ENCODE measurements at regions of chr13 and their contacts with region 1.

Region 1: GRCh38 chr13:51814825-51815650 is 11.1 kb upstream of the DHRS12 start:
- DNase-seq: no peak
- H3K4me3 ChIP-seq: peak overlapping the region; percentile 45
- H3K27ac ChIP-seq: no peak overlapping the region
- H3K27me3 ChIP-seq: peaks cover 49% of the 10 kb centered on the region
- CTCF ChIP-seq: peak; percentile 83

Region 2: DNA sequence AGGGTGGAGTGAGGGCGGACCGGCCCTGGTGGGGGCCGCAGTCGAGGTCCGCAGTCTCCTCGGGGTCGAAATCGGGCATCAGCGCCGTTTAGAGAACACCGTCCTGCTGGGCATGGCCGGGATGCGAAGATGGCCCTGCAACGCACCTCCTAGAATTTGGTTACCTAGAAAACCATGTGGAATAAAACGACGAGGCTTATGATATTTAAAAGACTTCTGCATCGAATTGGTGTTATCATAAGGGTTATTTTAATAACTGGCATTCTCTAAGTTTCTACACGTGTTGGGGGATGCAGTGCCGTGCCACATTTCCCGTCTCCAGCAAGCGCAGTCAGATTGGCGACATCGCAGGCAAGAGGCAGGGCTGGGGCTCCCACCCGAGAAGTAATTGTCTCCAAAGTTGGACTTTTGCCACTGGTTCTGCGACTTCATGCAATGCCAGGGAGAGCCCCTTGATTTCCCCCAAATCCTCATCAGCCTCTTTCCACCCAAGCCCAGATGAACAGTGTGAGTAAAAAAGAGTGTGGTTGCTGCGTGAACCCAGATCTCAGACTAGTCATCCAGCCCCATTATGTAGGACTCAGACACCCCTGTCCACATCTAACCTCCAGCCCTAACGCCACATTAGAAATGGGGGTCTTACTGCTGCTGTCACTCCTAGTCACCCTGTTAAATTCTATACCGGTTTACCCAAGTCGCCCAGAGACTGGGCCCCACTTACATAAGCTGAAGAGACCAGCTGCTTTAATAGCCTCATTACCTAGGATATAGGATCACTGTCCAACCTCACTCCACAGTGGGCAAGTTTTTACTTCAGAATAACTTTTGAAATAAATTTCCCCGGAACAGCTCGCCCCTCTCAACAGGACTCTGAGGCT is 10.5 kb before region 1 on chr13:
- CTCF ChIA-PET with region 1: interaction called, 15 read pairs
- POLR2A ChIA-PET with region 1: no interaction called
- DNase-seq: no peak
- H3K4me3 ChIP-seq: peak overlapping the region; percentile 76
- H3K27ac ChIP-seq: no peak overlapping the region
- H3K27me3 ChIP-seq: peaks cover 5% of the 10 kb centered on the region
- CTCF ChIP-seq: no peak

Region 3: DNA sequence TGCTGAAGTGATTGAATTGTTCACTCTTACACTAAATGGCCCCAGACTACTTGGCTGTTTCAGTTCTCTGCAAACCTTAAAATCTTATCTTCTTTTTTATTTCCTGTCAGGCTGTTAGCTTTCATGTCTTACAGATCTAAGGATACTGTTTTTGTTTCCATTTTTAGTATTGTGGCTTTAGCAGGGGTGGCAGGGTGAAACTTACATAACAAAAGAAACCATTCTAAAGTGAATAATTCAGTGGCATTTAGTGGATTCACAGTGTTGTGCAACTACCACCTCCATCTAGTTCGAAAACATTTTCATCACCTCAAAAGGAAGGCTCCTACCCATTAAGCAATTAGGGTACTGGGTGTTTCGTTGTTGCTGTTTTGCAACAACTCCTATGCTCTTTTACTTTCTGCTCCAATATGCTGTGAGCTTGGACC is 10.1 kb after region 1 on chr13:
- CTCF ChIA-PET with region 1: interaction called, 13 read pairs
- POLR2A ChIA-PET with region 1: no interaction called
- DNase-seq: no peak
- H3K4me3 ChIP-seq: no peak overlapping the region
- H3K27ac ChIP-seq: no peak overlapping the region
- H3K27me3 ChIP-seq: peaks cover 41% of the 10 kb centered on the region
- CTCF ChIP-seq: no peak

Region 4: GRCh38 chr13:51832471-51833152 is 17.6 kb after region 1 on chr13:
- CTCF ChIA-PET with region 1: interaction called, 25 read pairs
- POLR2A ChIA-PET with region 1: no interaction called
- DNase-seq: no peak
- H3K4me3 ChIP-seq: no peak overlapping the region
- H3K27ac ChIP-seq: no peak overlapping the region
- H3K27me3 ChIP-seq: peaks cover 36% of the 10 kb centered on the region
- CTCF ChIP-seq: peak; percentile 33